ENCODE measurements at regions of chr12 and their contacts with region 1.

Region 1: DNA sequence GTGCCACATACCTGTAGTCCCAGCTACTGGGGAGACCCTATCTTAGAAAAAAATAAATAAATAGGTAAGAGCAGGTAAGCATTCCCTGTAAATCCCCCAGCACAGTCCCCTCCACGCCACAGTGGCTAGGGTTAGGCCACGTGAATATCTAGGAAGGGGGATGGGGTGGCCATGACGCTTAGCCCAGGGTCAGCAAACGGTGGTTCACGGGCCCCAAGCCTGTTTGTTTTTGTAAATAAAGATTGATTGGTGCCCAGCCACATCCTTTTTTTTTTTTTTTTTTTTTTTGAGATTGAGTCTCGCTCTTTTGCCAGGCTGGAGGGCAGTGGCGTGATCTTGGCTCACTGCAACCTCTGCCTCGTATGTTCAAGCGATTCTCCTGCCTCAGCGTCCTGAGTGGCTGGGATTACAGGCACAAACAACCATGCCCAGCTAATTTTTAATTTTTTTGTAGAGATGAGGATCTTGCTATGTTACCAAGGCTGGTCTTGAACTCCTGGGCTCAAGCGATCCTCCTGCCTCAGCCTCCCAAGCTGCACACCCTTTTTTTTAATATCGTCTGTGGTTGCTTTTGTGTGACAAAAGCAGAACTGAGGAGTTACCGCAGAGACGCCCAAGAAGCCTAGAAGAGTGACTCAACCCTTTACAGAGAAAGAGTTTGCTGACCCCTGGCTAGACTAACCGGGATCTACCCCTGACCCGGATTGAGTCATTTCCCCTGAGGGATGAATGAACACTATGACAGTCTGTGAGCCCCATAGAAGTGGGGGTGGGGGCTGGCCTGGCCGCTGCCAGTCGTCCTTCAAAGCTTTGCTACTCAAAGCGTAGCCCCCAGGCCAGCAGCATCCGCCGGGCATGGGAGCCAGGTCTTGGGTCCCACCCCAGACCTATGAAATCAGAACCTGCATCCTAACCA is 113.7 kb upstream of the NCOR2 start:
- DNase-seq: peak; percentile 99
- ATAC-seq: peak; percentile 66
- H3K4me3 ChIP-seq: peak overlapping the region; percentile 41
- H3K27ac ChIP-seq: peak overlapping the region; percentile 94
- H3K4me1 ChIP-seq: peaks cover 66% of the 10 kb centered on the region
- H3K27me3 ChIP-seq: no peaks in the 10 kb centered on the region
- CTCF ChIP-seq: 0 out of 2 replicates have a peak, but pooled peaks have one; percentile 31

Region 2: GRCh38 chr12:124518051-124518932 is 162.8 kb before region 1 on chr12:
- CTCF ChIA-PET with region 1: no interaction called
- POLR2A ChIA-PET with region 1: no interaction called
- intact Hi-C with region 1: loop called (anchors 2 kb)
- DNase-seq: peak; percentile 99
- ATAC-seq: peak; percentile 70
- H3K4me3 ChIP-seq: peak overlapping the region; percentile 71
- H3K27ac ChIP-seq: peak overlapping the region; percentile 93
- H3K4me1 ChIP-seq: peaks cover 54% of the 10 kb centered on the region
- H3K27me3 ChIP-seq: no peaks in the 10 kb centered on the region
- CTCF ChIP-seq: no peak

Region 3: DNA sequence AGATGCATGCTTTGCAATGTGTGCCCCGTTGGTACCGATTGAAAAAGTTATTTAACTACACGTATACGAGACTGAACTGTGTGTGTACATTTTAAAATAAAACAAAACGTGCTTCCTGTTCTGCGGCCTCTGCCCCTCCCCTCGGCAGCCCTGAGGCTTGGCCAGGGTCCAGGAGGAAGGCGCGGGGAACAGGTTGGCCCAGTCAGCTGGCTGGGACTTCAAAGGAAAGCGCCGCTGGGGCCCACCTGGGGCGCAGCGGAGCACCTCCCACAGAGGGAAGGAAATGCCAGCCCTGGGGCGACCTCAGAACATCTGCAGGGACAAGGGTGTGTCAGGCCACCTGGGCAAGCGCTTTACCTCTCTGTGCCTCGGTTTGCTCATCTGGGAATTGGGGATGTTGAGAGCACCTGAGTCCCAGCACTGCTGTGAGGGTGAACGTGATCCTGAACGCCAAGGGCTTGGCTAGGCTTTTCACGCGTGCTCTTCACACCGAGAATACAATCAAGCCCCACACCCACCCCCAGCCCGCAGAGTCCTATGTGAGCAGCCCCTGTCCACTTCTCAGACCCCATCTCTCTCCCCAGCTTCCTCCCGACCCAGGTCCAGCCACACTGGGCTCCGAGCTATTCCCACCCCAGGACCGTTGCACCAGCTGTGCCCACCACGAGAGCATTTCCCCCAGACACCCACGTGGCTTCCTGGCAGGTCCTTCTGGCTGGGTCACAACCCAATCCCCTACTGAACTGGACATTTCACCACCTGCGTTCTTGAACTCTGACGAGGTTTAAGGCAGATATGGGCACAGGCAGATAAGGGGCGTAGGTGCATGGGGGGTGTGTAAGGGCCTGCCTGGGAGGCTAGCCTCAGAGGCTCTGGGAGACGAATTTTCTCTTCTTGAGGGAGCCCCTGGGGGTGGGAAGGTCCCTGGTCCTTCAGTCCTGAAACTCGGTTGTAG is 71.8 kb before region 1 on chr12:
- CTCF ChIA-PET with region 1: no interaction called
- POLR2A ChIA-PET with region 1: no interaction called
- intact Hi-C with region 1: loop called (anchors 2 kb)
- DNase-seq: peak; percentile 96
- ATAC-seq: peak; percentile 71
- H3K4me3 ChIP-seq: peak overlapping the region; percentile 55
- H3K27ac ChIP-seq: peak overlapping the region; percentile 71
- H3K4me1 ChIP-seq: peaks cover 30% of the 10 kb centered on the region
- H3K27me3 ChIP-seq: no peaks in the 10 kb centered on the region
- CTCF ChIP-seq: no peak

Region 4: DNA sequence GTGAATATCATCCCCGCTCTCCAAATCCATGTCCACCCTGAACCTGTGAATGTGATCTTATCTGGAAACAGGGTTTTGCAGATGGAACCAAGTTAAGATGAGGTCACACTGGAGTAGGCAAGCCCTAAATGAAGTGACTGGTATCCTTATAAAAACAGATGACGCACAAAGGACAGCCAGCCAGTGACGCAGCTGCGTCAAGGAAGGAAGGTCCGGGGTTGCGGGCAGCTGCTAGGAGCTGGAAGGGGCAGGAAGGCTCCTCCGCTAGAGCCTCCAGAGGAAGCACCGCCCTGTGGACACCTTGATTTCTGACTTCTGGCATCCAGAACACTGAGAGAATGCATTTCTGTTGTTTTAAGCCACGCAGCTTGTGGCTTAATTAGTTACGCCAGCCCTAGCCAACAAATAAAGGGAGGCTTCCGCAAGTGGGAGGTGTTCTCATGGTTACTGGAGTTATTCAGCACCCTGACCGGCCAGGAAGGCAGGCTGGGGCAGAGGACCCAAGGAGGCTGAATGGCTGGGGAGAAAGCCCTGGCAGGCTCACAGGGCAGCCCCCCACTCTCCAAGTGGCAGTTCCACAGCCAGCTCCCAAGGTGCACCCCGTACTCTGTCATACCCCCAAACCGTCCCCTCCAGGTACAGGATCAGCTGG is 13.9 kb after region 1 on chr12:
- CTCF ChIA-PET with region 1: no interaction called
- POLR2A ChIA-PET with region 1: no interaction called
- intact Hi-C with region 1: no loop called
- DNase-seq: no peak
- ATAC-seq: peak; percentile 42
- H3K4me3 ChIP-seq: no peak overlapping the region
- H3K27ac ChIP-seq: no peak overlapping the region
- H3K4me1 ChIP-seq: no peaks in the 10 kb centered on the region
- H3K27me3 ChIP-seq: no peaks in the 10 kb centered on the region
- CTCF ChIP-seq: no peak

Region 5: GRCh38 chr12:124720004-124720680 is 39.0 kb after region 1 on chr12:
- CTCF ChIA-PET with region 1: no interaction called
- POLR2A ChIA-PET with region 1: no interaction called
- intact Hi-C with region 1: loop called (anchors 1 kb)
- DNase-seq: peak; percentile 76
- ATAC-seq: peak; percentile 66
- H3K4me3 ChIP-seq: peak overlapping the region; percentile 9; the same call in 1 of the 2 replicates
- H3K27ac ChIP-seq: peak overlapping the region; percentile 63
- H3K4me1 ChIP-seq: peaks cover 28% of the 10 kb centered on the region
- H3K27me3 ChIP-seq: no peaks in the 10 kb centered on the region
- CTCF ChIP-seq: peak; percentile 48

Region 6: DNA sequence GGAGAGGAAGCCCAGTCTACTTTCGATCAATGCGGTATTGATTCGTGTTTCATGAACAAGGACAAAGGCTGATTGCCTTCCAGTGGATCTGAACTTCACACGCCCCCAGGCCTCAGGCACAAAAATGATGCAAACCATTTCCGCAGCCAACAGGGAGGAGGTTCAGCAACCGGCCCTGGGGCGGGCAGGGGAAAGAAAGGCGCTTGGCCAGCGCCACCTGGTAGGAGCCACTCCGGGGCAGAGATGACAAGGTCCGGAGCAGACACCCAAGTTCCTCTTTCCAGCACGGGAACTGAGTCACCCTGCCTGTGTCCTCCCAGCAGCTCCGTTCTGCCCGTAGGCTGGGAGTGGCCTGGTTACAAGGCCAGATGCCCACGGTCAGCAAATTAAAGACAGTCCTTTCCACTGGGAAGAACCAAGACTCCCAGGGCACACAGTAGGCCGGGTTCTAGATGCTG is 46.2 kb after region 1 on chr12:
- CTCF ChIA-PET with region 1: no interaction called
- POLR2A ChIA-PET with region 1: no interaction called
- intact Hi-C with region 1: loop called (anchors 2 kb)
- DNase-seq: peak; percentile 95
- ATAC-seq: peak; percentile 98
- H3K4me3 ChIP-seq: peak overlapping the region; percentile 39; the same call in 1 of the 2 replicates
- H3K27ac ChIP-seq: peak overlapping the region; percentile 77
- H3K4me1 ChIP-seq: peaks cover 23% of the 10 kb centered on the region
- H3K27me3 ChIP-seq: no peaks in the 10 kb centered on the region
- CTCF ChIP-seq: peak; percentile 49; the same call in 1 of the 2 replicates

Region 7: GRCh38 chr12:124745891-124746570 is 64.9 kb after region 1 on chr12:
- CTCF ChIA-PET with region 1: no interaction called
- POLR2A ChIA-PET with region 1: no interaction called
- intact Hi-C with region 1: loop called (anchors 1 kb)
- DNase-seq: peak; percentile 94
- ATAC-seq: peak; percentile 81
- H3K4me3 ChIP-seq: peak overlapping the region; percentile 35; the same call in 1 of the 2 replicates
- H3K27ac ChIP-seq: peak overlapping the region; percentile 79
- H3K4me1 ChIP-seq: peaks cover 36% of the 10 kb centered on the region
- H3K27me3 ChIP-seq: no peaks in the 10 kb centered on the region
- CTCF ChIP-seq: no peak

Region 8: GRCh38 chr12:124767066-124767821 is 86.1 kb after region 1 on chr12:
- CTCF ChIA-PET with region 1: no interaction called
- POLR2A ChIA-PET with region 1: no interaction called
- intact Hi-C with region 1: loop called (anchors 1 kb)
- DNase-seq: peak; percentile 78
- ATAC-seq: peak; percentile 78
- H3K4me3 ChIP-seq: no peak overlapping the region
- H3K27ac ChIP-seq: no peak overlapping the region
- H3K4me1 ChIP-seq: peaks cover 16% of the 10 kb centered on the region
- H3K27me3 ChIP-seq: no peaks in the 10 kb centered on the region
- CTCF ChIP-seq: peak; percentile 99

Region 9: DNA sequence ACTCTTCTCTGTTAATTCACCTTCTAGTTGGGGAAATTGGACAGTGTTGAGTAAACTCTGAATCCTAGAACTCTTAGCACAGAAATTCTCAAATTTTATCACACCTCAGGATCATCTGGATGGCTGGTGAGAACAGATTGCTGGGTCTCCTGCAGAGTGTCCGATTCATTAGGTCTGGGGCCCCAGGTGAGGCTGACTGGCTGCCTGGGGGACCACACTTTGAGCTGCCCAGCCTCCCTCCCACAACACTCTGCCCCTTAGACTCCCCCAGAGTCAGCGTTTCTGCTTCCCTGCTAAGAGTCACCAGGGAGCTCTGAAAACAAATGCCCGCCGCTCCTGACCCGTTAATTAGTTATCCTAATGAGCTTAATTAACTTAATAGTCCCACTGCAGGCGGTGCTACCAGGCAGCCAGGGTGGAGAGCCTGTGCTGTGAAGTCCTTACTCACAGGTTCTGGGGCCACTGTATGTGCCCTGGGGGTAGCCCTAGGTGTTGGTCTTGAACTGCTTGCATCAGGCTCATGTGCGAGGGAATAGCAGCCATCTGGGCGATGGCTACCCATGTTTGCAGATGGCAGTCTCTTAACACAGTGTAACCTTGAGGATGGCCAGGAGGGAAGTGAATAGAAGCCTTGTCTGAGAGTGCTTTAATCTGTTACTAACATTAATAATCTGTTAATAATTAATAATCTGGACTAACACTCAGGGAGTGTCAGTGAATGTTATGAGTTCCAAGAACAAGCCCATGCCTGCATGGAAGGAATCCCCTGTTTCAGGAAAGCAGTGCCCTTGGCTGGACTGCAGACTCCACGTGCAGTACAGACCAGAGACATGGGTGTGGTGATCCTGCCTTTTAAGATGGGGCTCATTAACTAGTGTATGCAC is 419.7 kb after region 1 on chr12:
- CTCF ChIA-PET with region 1: no interaction called
- POLR2A ChIA-PET with region 1: no interaction called
- intact Hi-C with region 1: no loop called
- DNase-seq: no peak
- ATAC-seq: no peak
- H3K4me3 ChIP-seq: no peak overlapping the region
- H3K27ac ChIP-seq: no peak overlapping the region
- H3K4me1 ChIP-seq: no peaks in the 10 kb centered on the region
- H3K27me3 ChIP-seq: no peaks in the 10 kb centered on the region
- CTCF ChIP-seq: no peak

Measured in PC-3 (cell line).